ENCODE measurements at regions of chr5 and their contacts with region 1.

Region 1: DNA sequence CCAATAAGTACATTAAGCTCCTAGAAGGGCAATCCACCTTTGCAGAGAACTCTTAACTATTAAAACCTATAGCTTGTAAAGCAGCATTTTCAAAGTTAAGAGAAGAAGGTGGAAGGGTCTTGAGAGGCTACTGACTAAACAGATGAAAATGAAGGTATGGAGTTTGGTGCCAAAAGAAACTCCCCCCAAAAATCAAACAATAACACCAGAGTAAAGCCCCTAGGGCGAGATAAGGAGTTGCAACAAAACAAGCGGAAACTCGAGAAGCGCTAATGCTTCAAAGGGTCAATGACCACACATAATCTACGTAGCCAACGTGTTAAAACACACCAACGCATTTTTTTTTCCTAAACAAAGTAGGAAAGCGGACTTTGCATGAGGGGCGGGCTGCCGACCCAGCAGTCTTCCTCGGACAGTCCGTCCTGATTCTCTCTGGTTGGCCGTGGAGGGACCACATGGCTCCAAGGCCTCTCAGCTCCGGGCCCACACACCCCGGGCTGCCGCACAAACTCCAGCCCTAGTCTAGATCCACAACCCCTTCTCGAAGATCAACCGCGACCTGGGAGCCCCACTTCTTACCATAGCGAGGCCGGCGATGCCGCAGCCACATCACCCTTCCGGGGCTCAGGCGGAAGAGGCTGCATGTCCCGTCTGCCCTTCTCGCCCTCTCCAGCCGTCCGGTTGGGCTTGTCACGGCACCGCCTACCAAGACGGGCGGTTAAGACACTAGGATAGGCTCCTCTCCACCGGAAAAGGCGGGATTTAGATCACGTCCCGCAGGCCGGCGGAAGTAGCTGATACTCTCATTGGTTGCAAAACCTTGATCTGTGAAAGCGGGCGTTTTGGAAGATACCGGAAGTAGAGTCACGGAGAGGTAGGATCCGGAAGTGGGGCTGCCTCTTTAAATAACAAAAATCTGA is at the starts of genes TMEM167A and XRCC4:
- DNase-seq: peak; percentile 79 to 97 (median 93)
- ATAC-seq: peak; percentile 99
- H3K4me3 ChIP-seq: peak within 1 kb of the TSS; percentile 87 to 98
- H3K4me3 Mint-ChIP-seq: peak within 1 kb of the TSS; percentile 95 to 98 (median 97)
- H3K27ac ChIP-seq: peak within 1 kb of the TSS; percentile 90
- H3K27ac Mint-ChIP-seq: peak within 1 kb of the TSS; percentile 96
- H3K4me1 ChIP-seq: peaks cover 24 to 26% of the 10 kb centered on the region in 2 experiments
- H3K4me1 Mint-ChIP-seq: peaks cover 56 to 64% (median 61%) of the 10 kb centered on the region in 3 donors
- H3K27me3 ChIP-seq: no peaks in the 10 kb centered on the region
- H3K27me3 Mint-ChIP-seq: no peaks in the 10 kb centered on the region
- total RNA-seq, gene TMEM167A: 36.5 to 44.8 (median 41.7) TPM
- total RNA-seq, gene XRCC4: 3.5 to 5.1 (median 4.2) TPM

Region 2: DNA sequence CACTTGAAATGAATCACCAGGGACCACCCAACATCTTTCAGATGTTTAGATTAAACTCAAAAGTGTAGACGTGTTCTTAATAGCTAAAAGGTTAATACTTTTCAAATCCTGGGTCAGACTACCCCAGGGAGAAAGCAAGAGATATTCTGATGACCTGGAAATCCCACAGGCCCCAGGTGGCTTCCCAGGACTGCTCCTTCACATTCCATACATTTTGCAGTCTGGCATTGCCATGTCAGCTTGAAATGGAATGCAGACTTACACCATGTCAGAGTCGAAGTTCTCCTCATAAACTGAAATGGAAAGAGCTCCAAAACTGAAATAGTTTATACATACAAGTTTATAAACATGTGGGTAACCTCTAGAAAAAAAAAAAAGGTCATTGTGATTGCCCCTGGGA is 61.3 kb before region 1 on chr5:
- CTCF ChIA-PET with region 1: no interaction called
- POLR2A ChIA-PET with region 1: interaction called in 1 of 2 experiments, 10 read pairs
- DNase-seq: no peak
- ATAC-seq: no peak
- H3K4me3 ChIP-seq: no peak overlapping the region
- H3K4me3 Mint-ChIP-seq: no peak overlapping the region
- H3K27ac ChIP-seq: no peak overlapping the region
- H3K27ac Mint-ChIP-seq: no peak overlapping the region
- H3K4me1 ChIP-seq: no peaks in the 10 kb centered on the region
- H3K4me1 Mint-ChIP-seq: no peaks in the 10 kb centered on the region
- H3K27me3 ChIP-seq: no peaks in the 10 kb centered on the region
- H3K27me3 Mint-ChIP-seq: no peaks in the 10 kb centered on the region

Region 3: GRCh38 chr5:83038924-83039323 is 38.1 kb before region 1 on chr5:
- CTCF ChIA-PET with region 1: no interaction called
- POLR2A ChIA-PET with region 1: interaction called in 1 of 2 experiments, 14 read pairs
- DNase-seq: no peak
- ATAC-seq: no peak
- H3K4me3 ChIP-seq: no peak overlapping the region
- H3K4me3 Mint-ChIP-seq: no peak overlapping the region
- H3K27ac ChIP-seq: no peak overlapping the region
- H3K27ac Mint-ChIP-seq: no peak overlapping the region
- H3K4me1 ChIP-seq: no peaks in the 10 kb centered on the region
- H3K4me1 Mint-ChIP-seq: peaks cover 8 to 9% (median 8%) of the 10 kb centered on the region in 3 donors
- H3K27me3 ChIP-seq: no peaks in the 10 kb centered on the region
- H3K27me3 Mint-ChIP-seq: no peaks in the 10 kb centered on the region

Measured in T-cell (primary cell).